ENCODE measurements at regions of chrX and their contacts with region 1.

Region 1: GRCh38 chrX:120603707-120604360 is at the start of gene MCTS1:
- DNase-seq: peak; percentile 68
- ATAC-seq: peak; percentile 97
- H3K4me3 Mint-ChIP-seq: peak within 1 kb of the TSS; percentile 93
- H3K27ac Mint-ChIP-seq: peak within 1 kb of the TSS; percentile 100
- H3K4me1 Mint-ChIP-seq: peaks cover 2% of the 10 kb centered on the region
- H3K27me3 Mint-ChIP-seq: no peaks in the 10 kb centered on the region
- total RNA-seq, gene MCTS1: 40.5 to 42.1 TPM

Region 2: GRCh38 chrX:120560842-120561633 is 42.8 kb before region 1 on chrX and contains the start of gene CUL4B:
- POLR2A ChIA-PET with region 1: interaction called, 65 read pairs
- DNase-seq: peak; percentile 86
- ATAC-seq: peak; percentile 86
- H3K4me3 Mint-ChIP-seq: peak within 1 kb of the TSS; percentile 100
- H3K27ac Mint-ChIP-seq: peak within 1 kb of the TSS; percentile 99
- H3K4me1 Mint-ChIP-seq: peaks cover 15% of the 10 kb centered on the region
- H3K27me3 Mint-ChIP-seq: no peaks in the 10 kb centered on the region
- total RNA-seq, gene CUL4B: 40.7 to 41.3 TPM

Region 3: DNA sequence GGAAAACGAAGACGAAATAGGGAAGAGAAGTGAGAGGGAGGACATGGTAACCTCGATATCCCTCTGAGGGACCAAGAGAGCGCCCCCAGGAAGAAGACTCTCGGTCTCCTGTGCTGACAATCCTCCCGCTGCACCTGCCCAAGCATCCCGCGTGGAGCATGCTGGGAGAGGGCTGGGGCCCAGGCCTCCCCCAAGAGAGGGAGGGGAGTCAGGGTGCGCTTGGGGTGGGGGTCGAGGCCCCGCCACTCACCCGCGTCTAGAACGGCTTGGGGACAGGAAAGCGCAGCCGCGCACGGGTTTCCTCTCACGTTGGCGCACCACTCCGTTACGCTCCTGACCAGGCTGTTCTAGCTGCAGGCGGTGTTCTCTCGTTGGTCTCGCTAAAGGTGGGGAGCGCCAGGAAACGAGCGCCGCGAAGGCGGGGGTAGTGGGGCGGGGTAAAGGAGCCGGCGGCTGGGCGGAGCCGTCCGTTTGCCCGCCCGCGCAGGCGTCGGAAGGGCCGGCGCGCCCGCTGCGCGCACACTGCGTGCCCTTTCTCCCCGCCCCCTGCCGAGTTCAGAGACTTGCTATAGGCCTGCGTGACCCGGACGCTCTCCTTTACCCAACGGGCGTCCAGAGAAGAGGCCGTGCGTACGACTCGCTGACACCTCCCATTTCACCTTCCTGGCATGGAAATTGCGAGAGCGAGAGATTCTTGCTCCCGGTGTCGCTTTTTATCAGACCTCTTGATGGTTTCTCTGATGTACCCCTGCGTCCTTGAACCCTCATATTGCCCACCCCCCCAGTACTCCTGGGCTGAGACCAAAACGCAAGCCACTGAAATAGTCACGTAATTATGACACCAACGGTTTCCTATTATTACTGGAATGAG is 26.1 kb after region 1 on chrX and contains the start of gene C1GALT1C1:
- POLR2A ChIA-PET with region 1: interaction called, 27 read pairs
- DNase-seq: peak; percentile 90
- ATAC-seq: peak; percentile 97
- H3K4me3 Mint-ChIP-seq: peak within 1 kb of the TSS; percentile 96
- H3K27ac Mint-ChIP-seq: peak within 1 kb of the TSS; percentile 98
- H3K4me1 Mint-ChIP-seq: peaks cover 11% of the 10 kb centered on the region
- H3K27me3 Mint-ChIP-seq: no peaks in the 10 kb centered on the region
- total RNA-seq, gene C1GALT1C1: 18.1 to 20.2 TPM

Region 4: GRCh38 chrX:120697053-120697452 is 93.2 kb after region 1 on chrX:
- POLR2A ChIA-PET with region 1: interaction called, 11 read pairs
- DNase-seq: peak; percentile 45
- ATAC-seq: peak; percentile 92
- H3K4me3 Mint-ChIP-seq: peak overlapping the region; percentile 70
- H3K27ac Mint-ChIP-seq: peak overlapping the region; percentile 98
- H3K4me1 Mint-ChIP-seq: peaks cover 17% of the 10 kb centered on the region
- H3K27me3 Mint-ChIP-seq: no peaks in the 10 kb centered on the region